RWPE1 (cell line): ENCODE measurements at regions of chr12 and their contacts with region 1.

Region 1: DNA sequence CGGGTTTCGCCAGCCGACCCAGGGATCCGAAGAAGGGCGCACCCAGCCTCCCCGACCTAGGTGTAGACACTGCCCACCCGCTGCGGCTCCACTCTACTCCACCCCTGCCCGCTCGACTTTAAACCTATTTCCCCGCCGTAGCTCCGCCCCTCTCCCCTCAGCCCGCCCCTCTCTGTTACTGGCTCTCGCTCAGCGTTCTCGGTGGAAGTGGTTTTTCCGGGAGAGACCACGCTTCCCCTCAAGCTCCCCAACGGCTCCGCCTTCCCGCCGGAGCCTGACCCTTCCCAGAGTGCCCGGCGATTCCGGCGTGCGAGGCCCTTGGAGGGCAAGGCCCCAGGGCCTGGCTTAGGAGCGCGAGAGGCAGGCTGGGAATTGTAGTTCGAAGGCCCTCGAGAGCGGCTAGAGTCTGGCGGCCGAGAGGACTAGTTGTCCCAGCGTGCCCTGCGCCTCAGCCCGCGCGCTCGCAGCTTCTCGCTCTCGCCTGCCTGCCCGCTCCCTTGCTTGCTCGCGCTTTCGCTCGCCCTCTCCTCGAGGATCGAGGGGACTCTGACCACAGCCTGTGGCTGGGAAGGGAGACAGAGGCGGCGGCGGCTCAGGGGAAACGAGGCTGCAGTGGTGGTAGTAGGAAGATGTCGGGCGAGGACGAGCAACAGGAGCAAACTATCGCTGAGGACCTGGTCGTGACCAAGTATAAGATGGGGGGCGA is at the start of gene PA2G4:
- DNase-seq: peak; percentile 96
- H3K27ac ChIP-seq: peak within 1 kb of the TSS; percentile 83
- CTCF ChIP-seq: no peak

Region 2: GRCh38 chr12:56078990-56079664 is 25.1 kb before region 1 on chr12:
- CTCF ChIA-PET with region 1: interaction called, 10 read pairs
- POLR2A ChIA-PET with region 1: interaction called, 5 read pairs
- DNase-seq: peak; percentile 81
- H3K27ac ChIP-seq: peak overlapping the region; percentile 80
- CTCF ChIP-seq: peak; percentile 92

Region 3: GRCh38 chr12:56117778-56118687 is 13.8 kb after region 1 on chr12 and contains the start of gene ZC3H10:
- CTCF ChIA-PET with region 1: no interaction called
- POLR2A ChIA-PET with region 1: interaction called, 10 read pairs
- DNase-seq: peak; percentile 96
- H3K27ac ChIP-seq: peak within 1 kb of the TSS; percentile 92
- CTCF ChIP-seq: peak; percentile 50